ENCODE measurements at regions of chr1 and their contacts with region 1.

Region 1: DNA sequence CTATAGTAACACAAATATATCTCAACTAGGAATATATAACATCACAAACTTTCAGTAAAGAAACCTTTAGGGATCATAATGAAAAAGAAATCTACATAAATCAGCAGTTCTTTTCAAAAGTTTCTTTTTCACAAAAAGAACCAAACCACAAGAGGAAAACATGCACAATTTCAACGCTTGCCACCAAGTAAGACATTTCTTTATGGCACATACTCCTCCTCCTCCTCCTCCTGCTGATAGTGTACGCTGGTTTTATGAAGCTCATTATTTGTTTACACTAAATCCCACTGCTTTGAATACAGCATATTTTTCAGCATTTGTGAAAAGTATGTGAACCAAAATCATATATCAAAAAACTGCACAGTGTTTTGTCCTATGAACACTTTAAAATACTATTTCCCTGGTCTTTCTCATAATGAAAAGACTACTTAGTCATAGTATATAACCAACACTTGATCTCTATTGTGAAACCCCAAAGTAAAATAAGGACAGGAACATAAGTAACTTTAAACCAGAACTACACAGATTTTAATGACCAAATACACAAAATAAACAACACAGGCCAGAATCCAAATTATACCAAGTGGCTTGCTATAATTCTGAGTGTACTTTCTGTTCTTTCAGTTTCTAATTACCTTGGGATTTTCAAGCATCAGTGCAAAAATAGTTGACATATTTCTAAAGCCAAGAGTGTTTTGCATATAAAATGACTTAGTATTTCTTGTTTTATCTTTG is 184.2 kb downstream of the EIF4G3 start:
- DNase-seq: no peak
- ATAC-seq: peak; percentile 53 to 90 (median 78)
- H3K4me3 ChIP-seq: peak overlapping the region; percentile 5
- H3K27ac ChIP-seq: peak overlapping the region; percentile 63
- H3K4me1 ChIP-seq: peaks cover 47% of the 10 kb centered on the region
- H3K27me3 ChIP-seq: no peaks in the 10 kb centered on the region
- CTCF ChIP-seq: no peak

Region 2: DNA sequence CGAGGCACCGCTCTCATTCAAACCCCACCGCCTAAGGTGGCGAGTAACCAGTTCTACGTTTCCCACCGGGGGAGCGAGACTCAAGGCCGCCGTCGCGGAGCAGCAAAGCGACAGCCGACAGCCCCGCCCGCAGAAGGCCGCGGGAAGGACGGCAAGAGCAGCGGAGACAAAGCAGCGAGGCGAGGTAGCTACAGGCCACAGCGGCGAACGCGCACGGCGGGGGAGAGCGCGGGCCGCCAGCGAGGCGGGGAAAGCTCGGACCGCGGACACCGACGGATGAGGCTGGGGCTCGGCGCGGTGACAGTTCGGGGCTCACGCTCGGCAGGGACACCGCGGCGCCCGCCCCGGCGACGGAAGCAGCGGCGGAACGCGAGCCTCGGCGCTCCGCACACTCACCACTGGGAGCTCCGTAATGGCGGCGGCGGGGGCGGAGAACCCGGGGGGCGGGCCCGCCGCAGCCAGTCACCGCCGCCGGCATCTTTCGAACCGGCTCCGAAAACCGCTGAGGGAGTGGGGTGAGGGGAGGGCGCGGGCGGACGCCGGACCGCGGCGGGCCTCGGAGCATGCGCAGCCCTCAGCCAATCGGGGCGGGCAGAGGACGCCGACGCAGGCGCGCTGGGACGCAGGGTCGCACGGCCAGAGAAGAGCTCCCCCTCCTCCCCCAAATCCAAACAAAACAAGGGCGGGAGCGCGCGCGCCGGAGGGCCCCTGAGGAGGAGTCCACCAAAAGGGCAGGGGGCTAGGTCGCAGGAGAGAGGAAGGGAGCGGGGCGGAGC is 206.0 kb before region 1 on chr1:
- intact Hi-C with region 1: loop called in 1 of 2 experiments (anchors 10 kb)
- DNase-seq: peak; percentile 93 to 98
- ATAC-seq: peak; percentile 94 to 96 (median 94)
- H3K4me3 ChIP-seq: peak overlapping the region; percentile 82
- H3K27ac ChIP-seq: peak overlapping the region; percentile 93
- H3K4me1 ChIP-seq: peaks cover 38% of the 10 kb centered on the region
- H3K27me3 ChIP-seq: no peaks in the 10 kb centered on the region
- CTCF ChIP-seq: no peak

Region 3: GRCh38 chr1:20964540-20965484 is 27.7 kb before region 1 on chr1:
- intact Hi-C with region 1: no loop called
- DNase-seq: no peak
- ATAC-seq: peak in 1 of 4 donors; percentile 31
- H3K4me3 ChIP-seq: no peak overlapping the region
- H3K27ac ChIP-seq: peak overlapping the region; percentile 82
- H3K4me1 ChIP-seq: peaks cover 25% of the 10 kb centered on the region
- H3K27me3 ChIP-seq: no peaks in the 10 kb centered on the region
- CTCF ChIP-seq: no peak

Region 4: DNA sequence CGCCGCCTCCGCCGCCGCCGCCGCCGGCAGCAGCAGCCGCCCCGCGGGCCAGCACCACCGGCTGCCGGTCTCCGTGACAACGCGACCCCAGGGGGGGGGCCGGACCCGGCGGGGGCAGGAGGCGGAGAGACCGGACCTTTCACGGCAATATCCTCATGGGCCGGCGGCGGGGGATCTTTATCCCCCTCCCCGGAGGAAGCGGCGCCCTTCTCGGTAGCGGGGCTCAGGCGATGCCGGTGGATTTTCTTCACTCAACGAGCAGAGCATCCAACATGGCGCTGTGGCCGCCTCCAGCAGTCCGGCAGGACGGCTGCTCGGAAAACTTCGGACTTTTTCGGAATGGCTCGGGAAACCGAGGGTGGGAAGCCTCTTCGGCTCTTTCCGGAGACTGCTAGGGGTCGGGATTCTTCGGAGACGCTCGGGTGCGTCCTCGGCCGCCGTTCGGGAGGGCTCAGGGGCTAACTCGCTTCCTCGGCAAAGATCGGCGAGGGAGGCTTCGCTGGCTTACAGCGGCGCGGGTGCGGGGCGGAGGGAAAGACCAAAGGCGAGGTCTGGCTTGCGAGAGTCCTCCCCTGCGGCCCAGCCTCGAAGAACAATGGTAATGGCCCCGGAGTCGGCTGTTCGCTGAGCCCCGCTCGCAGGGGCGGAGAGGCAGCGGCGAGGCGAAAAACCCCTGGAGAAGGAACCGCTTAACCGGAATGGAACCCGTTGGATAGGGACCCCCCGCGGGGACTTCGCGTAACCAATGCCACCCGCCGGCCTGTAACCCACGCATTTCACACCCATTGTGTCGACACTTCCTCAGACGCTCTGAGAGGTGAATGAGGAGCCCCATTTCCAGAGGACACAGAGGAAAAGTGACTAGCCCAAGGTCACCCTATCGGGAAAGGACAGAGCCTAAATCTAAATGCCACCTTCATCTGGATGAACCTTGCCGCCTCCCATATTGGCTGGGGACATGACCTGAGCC is 184.4 kb after region 1 on chr1 and contains the start of gene EIF4G3:
- intact Hi-C with region 1: loop called in 1 of 2 experiments (anchors 5 kb)
- DNase-seq: peak; percentile 98 to 99
- ATAC-seq: peak; percentile 96 to 98 (median 98)
- H3K4me3 ChIP-seq: peak within 1 kb of the TSS; percentile 98
- H3K27ac ChIP-seq: peak within 1 kb of the TSS; percentile 85
- H3K4me1 ChIP-seq: peaks cover 22% of the 10 kb centered on the region
- H3K27me3 ChIP-seq: no peaks in the 10 kb centered on the region
- CTCF ChIP-seq: no peak
- total RNA-seq, gene EIF4G3: 38.7 to 58.1 (median 48.2) TPM

Region 5: DNA sequence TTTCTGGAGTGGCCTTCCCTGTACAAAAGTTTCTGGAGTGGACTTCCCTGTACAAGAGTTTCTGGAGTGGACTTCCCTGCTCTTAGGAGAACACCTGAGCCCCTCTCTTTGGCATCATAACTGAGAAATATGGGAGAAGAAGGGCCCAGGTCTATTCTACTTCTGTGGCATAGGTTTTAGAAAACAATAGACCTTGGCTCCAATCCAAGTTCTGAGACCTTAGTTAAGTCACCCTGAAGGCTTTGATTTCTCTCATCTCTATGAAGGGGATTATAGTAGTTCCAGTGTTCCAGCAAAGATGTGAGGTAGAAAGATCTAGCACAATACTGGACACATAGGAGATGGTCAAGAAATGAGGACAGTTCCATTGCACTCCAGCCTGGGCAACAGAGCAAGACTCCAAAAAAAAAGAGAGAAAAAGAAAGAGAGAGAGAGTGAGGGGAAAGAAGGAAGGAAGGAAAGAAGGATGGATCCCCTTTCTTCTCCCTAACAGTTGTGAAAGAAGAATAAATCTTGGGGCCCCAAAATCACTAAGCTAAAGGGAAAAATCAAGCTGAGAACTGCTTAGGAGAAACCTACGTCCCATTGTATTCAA is 197.5 kb after region 1 on chr1:
- intact Hi-C with region 1: loop called in 1 of 2 experiments (anchors 5 kb)
- DNase-seq: no peak
- ATAC-seq: no peak
- H3K4me3 ChIP-seq: no peak overlapping the region
- H3K27ac ChIP-seq: no peak overlapping the region
- H3K4me1 ChIP-seq: peaks cover 16% of the 10 kb centered on the region
- H3K27me3 ChIP-seq: no peaks in the 10 kb centered on the region
- CTCF ChIP-seq: no peak

Measured in psoas muscle (tissue), 8 donors.